CD8-positive, alpha-beta T cell (primary cell): ENCODE measurements at regions of chr17 and their contacts with region 1.

Region 1: DNA sequence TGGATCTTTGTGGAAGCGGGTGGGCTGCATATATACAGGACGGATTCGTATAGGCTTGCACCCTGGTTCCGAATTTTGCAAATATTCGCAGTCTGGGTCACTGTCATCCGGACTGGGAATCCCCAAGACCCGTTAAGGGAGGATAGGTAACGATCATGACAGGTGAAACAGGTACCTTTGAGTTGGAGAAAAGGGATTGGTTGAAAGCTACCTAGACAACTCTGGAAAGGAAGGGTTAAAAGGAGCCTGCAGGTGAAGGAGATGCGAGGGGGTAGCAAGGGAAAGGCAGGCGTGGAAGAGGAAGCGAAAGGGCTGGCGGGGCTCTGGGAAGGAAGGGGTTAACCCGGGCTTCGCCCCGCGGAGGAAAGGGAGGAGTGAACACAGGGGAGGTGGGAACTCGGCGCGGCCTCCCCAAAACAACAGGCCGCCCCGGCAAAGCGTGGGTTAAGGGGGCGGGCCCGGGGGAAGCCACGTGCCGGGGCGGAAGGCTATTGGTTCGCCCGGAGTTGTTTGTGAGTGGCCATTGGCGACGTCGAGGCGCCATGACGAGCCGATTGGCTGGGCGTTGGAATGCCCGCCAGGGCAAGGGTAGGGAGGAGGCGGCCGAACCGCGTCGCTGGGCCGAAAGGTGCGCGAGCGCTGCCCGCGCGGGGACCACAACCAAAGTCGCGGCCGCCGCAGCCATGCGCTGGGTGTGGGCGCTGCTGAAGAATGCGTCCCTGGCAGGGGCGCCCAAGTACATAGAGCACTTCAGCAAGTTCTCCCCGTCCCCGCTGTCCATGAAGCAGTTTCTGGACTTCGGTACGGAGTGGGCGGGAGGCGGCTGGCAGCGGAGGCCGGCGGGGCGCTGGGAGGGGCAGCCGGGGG is at the start of gene PDK2:
- DNase-seq: peak; percentile 94 to 98 (median 97)
- ATAC-seq: peak; percentile 94
- H3K4me3 ChIP-seq: peak within 1 kb of the TSS; percentile 69 to 80
- H3K4me3 Mint-ChIP-seq: peak within 1 kb of the TSS; percentile 99
- H3K27ac ChIP-seq: peak within 1 kb of the TSS; percentile 71 to 82
- H3K27ac Mint-ChIP-seq: peak within 1 kb of the TSS; percentile 97
- H3K4me1 ChIP-seq: peaks cover 15% of the 10 kb centered on the region
- H3K4me1 Mint-ChIP-seq: peaks cover 34% of the 10 kb centered on the region
- H3K27me3 ChIP-seq: no peaks in the 10 kb centered on the region
- H3K27me3 Mint-ChIP-seq: no peaks in the 10 kb centered on the region
- CTCF ChIP-seq: no peak
- total RNA-seq, gene PDK2: 8.4 to 10.4 TPM

Region 2: DNA sequence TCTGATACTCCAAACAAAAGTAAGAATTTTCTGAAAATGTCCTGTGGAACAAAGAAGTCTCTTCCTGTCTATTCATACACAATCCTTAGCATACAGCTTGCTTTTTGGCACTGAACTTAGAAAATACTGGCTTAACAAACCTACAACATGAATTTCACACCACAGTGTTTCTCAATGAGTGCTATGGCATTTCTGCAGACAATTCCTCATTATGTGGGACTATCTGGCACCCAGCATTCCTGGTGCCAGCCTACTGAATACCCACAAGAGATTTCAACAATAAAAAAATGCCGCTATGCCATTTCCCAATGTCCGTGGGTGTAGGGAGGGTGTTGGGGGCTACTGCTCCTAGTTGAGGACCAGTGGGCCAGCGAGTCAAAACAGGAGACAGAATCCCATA is 795.0 kb before region 1 on chr17:
- CTCF ChIA-PET with region 1: no interaction called
- POLR2A ChIA-PET with region 1: no interaction called
- intact Hi-C with region 1: no loop called
- DNase-seq: no peak
- ATAC-seq: no peak
- H3K4me3 ChIP-seq: no peak overlapping the region
- H3K4me3 Mint-ChIP-seq: no peak overlapping the region
- H3K27ac ChIP-seq: no peak overlapping the region
- H3K27ac Mint-ChIP-seq: no peak overlapping the region
- H3K4me1 ChIP-seq: no peaks in the 10 kb centered on the region
- H3K4me1 Mint-ChIP-seq: no peaks in the 10 kb centered on the region
- H3K27me3 ChIP-seq: no peaks in the 10 kb centered on the region
- H3K27me3 Mint-ChIP-seq: no peaks in the 10 kb centered on the region
- CTCF ChIP-seq: no peak

Region 3: DNA sequence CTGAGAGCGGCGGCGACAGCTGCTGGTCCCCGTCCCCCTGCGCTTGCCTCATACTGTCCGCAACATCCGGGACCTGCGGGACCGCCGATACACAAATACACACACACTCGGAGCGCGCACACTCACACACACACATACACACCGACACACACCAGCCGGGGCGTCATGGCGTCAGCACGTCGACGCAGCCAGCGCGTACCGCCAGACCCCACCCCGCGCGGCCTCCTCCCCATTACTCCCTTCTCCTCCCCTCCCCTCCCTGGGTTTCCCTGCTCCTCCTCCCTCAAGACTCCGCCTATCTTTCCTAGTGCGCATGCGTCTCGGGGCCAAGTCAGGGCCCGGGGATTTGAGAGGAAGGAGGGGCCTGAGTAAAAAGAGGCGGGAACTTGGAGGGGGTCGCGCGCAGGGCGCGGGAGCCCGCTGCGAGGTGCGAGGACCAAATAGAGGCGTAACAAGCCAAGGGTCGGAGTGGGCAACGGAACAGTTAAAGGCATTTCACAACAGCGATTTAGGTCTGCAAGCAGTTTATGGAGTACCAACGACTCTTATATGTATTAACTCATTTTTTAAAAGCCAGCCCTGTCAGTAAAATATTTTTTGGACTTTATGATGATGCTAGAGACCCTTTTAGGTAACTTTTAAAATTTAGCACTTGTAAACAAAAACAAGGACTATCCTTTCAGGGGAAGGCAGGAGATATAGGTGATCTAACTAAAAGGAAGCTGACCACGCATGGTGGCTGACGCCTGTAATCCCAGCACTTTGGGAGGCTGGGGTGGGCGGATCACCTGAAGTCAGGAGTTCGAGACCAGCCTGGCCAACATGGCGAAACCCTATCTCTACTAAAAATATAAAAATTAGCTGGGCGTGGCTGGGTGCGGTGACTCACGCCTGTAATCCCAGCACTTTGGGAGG is 416.8 kb before region 1 on chr17 and contains the start of gene SPOP:
- CTCF ChIA-PET with region 1: no interaction called
- POLR2A ChIA-PET with region 1: no interaction called
- intact Hi-C with region 1: loop called in 1 of 2 experiments (anchors 1 kb)
- DNase-seq: peak; percentile 97 to 100 (median 99)
- ATAC-seq: peak; percentile 94
- H3K4me3 ChIP-seq: peak within 1 kb of the TSS; percentile 76 to 81
- H3K4me3 Mint-ChIP-seq: peak within 1 kb of the TSS; percentile 97
- H3K27ac ChIP-seq: peak within 1 kb of the TSS; percentile 91 to 98
- H3K27ac Mint-ChIP-seq: peak within 1 kb of the TSS; percentile 100
- H3K4me1 ChIP-seq: peaks cover 29% of the 10 kb centered on the region
- H3K4me1 Mint-ChIP-seq: peaks cover 49% of the 10 kb centered on the region
- H3K27me3 ChIP-seq: no peaks in the 10 kb centered on the region
- H3K27me3 Mint-ChIP-seq: no peaks in the 10 kb centered on the region
- CTCF ChIP-seq: no peak
- total RNA-seq, gene SPOP: 30.5 to 34.3 TPM

Region 4: GRCh38 chr17:50026901-50027630 is 67.9 kb before region 1 on chr17:
- CTCF ChIA-PET with region 1: interaction called, 100 read pairs
- POLR2A ChIA-PET with region 1: no interaction called
- intact Hi-C with region 1: loop called in 1 of 2 experiments (anchors 2 kb)
- DNase-seq: peak; percentile 57 to 87 (median 80)
- ATAC-seq: peak; percentile 92
- H3K4me3 ChIP-seq: no peak overlapping the region
- H3K4me3 Mint-ChIP-seq: peak overlapping the region; percentile 37
- H3K27ac ChIP-seq: no peak overlapping the region
- H3K27ac Mint-ChIP-seq: no peak overlapping the region
- H3K4me1 ChIP-seq: peaks cover 8% of the 10 kb centered on the region
- H3K4me1 Mint-ChIP-seq: peaks cover 9% of the 10 kb centered on the region
- H3K27me3 ChIP-seq: peaks cover 0 to 5% of the 10 kb centered on the region in 2 experiments
- H3K27me3 Mint-ChIP-seq: peaks cover 29% of the 10 kb centered on the region
- CTCF ChIP-seq: peak; percentile 96

Region 5: GRCh38 chr17:50114849-50115357 is 19.9 kb after region 1 on chr17:
- CTCF ChIA-PET with region 1: interaction called, 14 read pairs
- POLR2A ChIA-PET with region 1: interaction called, 5 read pairs
- intact Hi-C with region 1: loop called in 1 of 2 experiments (anchors 2 kb)
- DNase-seq: peak in 5 of 9 experiments; percentile 30 to 69 (median 45)
- ATAC-seq: peak; percentile 56
- H3K4me3 ChIP-seq: no peak overlapping the region
- H3K4me3 Mint-ChIP-seq: no peak overlapping the region
- H3K27ac ChIP-seq: no peak overlapping the region
- H3K27ac Mint-ChIP-seq: no peak overlapping the region
- H3K4me1 ChIP-seq: peaks cover 14% of the 10 kb centered on the region
- H3K4me1 Mint-ChIP-seq: peaks cover 13% of the 10 kb centered on the region
- H3K27me3 ChIP-seq: peaks cover 11 to 17% of the 10 kb centered on the region in 2 experiments
- H3K27me3 Mint-ChIP-seq: peaks cover 36% of the 10 kb centered on the region
- CTCF ChIP-seq: peak; percentile 56

Region 6: DNA sequence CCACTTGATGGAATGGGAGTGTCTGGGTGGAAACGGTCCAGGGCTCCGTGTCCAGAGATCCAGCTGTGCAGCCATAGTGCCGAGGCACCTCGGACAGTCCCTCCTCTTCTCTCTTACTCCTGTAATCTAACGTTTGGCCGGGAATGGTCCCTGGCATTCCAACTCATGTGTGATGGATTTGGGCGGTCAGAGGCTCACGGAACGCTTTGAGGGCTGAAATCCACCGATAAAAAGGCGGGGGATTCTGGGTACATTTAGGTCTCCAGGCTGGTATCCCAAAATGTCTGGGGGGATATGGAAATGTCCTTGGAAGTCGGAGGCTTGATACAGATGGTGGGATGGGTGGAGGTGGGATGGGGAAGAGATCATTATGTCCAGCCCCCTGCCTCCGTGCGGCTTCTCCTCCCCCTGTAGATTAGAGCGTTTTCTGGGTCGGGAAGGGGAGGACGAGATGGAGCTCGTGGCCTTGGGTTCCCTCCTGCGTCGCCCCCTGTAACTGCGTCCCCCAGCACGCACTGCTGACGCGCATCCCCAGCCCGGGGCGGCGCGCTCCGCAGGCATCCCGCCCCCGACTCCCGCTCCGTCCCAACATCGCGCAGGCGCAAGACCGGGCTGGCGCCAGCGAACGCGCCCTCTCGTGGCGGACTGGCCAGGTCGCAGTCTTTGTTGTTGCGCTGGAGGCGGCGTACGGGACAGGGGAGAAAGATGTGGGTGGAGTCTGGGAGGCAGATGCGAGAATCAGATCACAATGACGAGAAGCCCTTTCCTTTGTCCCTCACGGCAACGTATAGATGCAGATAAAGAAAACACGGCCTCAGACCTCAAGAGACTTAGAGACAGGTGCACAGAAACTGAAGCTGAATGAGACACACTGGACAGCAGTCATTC is 66.3 kb after region 1 on chr17:
- CTCF ChIA-PET with region 1: interaction called, 15 read pairs
- POLR2A ChIA-PET with region 1: interaction called, 3 read pairs
- intact Hi-C with region 1: loop called (anchors 1 kb)
- DNase-seq: peak; percentile 89 to 97 (median 93)
- ATAC-seq: peak; percentile 90
- H3K4me3 ChIP-seq: peak overlapping the region; percentile 49 to 58
- H3K4me3 Mint-ChIP-seq: peak overlapping the region; percentile 69
- H3K27ac ChIP-seq: peak overlapping the region; percentile 43 to 63
- H3K27ac Mint-ChIP-seq: peak overlapping the region; percentile 88
- H3K4me1 ChIP-seq: peaks cover 32% of the 10 kb centered on the region
- H3K4me1 Mint-ChIP-seq: peaks cover 45% of the 10 kb centered on the region
- H3K27me3 ChIP-seq: no peaks in the 10 kb centered on the region
- H3K27me3 Mint-ChIP-seq: no peaks in the 10 kb centered on the region
- CTCF ChIP-seq: peak; percentile 83

Region 7: GRCh38 chr17:50297407-50297865 is 202.4 kb after region 1 on chr17:
- CTCF ChIA-PET with region 1: interaction called, 12 read pairs
- POLR2A ChIA-PET with region 1: no interaction called
- intact Hi-C with region 1: loop called (anchors 1 kb)
- DNase-seq: peak; percentile 59 to 86 (median 80)
- ATAC-seq: peak; percentile 100
- H3K4me3 ChIP-seq: no peak overlapping the region
- H3K4me3 Mint-ChIP-seq: no peak overlapping the region
- H3K27ac ChIP-seq: no peak overlapping the region
- H3K27ac Mint-ChIP-seq: no peak overlapping the region
- H3K4me1 ChIP-seq: no peaks in the 10 kb centered on the region
- H3K4me1 Mint-ChIP-seq: no peaks in the 10 kb centered on the region
- H3K27me3 ChIP-seq: no peaks in the 10 kb centered on the region
- H3K27me3 Mint-ChIP-seq: peaks cover 3% of the 10 kb centered on the region
- CTCF ChIP-seq: peak; percentile 87